Astrocyte of the cerebellum (primary cell): ENCODE measurements at regions of chr22 and their contacts with region 1.

Region 1: DNA sequence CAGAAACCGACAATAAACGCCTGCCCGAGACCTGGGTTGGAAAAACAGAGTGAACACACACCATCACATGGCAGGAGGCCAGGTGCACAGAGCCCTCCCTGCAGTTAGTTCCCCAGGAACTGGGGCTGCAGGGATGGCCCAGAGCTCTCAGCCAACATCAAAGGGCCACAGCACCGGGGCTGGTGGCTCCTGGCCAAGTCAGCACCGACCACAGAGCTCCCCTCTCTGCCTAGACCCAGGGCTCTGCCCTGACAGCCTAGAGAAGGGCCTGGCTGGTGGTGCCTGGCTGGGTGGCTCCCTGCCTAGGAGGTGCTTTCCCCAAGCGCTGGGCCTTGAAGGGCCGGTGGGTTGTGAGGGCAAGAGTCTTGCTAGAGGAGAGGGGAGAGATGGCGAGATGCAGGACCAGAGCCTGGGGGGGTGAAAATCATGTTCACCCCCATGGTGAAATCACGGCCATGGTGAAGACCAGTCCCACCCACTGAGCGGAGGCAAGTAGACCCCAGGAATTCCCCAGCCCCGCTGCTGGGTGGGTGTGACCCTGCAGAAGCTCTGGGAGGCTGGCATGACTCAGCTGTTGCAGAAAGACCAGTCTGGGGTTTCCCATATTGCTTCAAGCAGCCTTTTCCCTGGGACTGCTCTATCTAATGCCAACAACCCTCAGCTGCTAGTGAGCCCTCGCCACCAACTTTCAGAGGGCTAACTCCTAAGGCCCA is 7.2 kb upstream of the BID start:
- DNase-seq: peak; percentile 61
- H3K4me3 ChIP-seq: no peak overlapping the region
- CTCF ChIP-seq: no peak

Region 2: GRCh38 chr22:17742527-17742902 is 39.0 kb before region 1 on chr22:
- in situ Hi-C with region 1: loop called (anchors 5 kb)
- DNase-seq: peak; percentile 40
- H3K4me3 ChIP-seq: no peak overlapping the region
- CTCF ChIP-seq: peak; percentile 82

Region 3: DNA sequence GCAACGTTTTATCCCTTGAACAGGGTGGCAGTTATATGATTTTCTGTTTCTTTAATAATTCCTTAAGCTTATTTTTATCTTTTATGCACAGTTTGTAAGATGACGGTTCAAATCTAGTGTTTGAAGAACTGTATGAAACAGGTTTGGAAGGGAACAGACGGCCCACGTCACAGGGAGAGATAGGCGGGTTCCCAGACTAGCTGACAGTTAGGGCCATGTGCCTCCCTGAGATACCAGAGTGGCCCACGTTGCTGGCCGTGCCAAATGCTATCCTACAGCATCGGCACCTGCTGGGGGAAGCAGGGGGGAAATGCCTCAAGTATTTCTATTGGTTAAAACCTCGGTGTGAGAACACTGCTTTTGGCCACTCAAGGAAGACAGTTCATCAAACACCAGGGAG is 43.0 kb after region 1 on chr22:
- in situ Hi-C with region 1: loop called (anchors 5 kb)
- DNase-seq: no peak
- H3K4me3 ChIP-seq: no peak overlapping the region
- CTCF ChIP-seq: no peak